Activated CD4-positive, alpha-beta memory T cell treated with anti-CD3 and anti-CD28 coated beads for 36 hours (primary cell): ENCODE measurements at regions of chr17 and their contacts with region 1.

Region 1: GRCh38 chr17:55421179-55421934 is at the start of gene MMD:
- DNase-seq: no peak
- H3K4me3 Mint-ChIP-seq: peak within 1 kb of the TSS; percentile 89
- H3K27ac Mint-ChIP-seq: peak within 1 kb of the TSS; percentile 93
- H3K4me1 Mint-ChIP-seq: peaks cover 42% of the 10 kb centered on the region
- H3K27me3 Mint-ChIP-seq: peaks cover 19% of the 10 kb centered on the region
- total RNA-seq, gene MMD: 22.1 to 24.2 TPM

Region 2: GRCh38 chr17:55314784-55315491 is 106.4 kb before region 1 on chr17:
- CTCF ChIA-PET with region 1: no interaction called
- POLR2A ChIA-PET with region 1: no interaction called
- intact Hi-C with region 1: loop called (anchors 10 kb)
- DNase-seq: peak; percentile 56
- H3K4me3 Mint-ChIP-seq: peak overlapping the region; percentile 18
- H3K27ac Mint-ChIP-seq: peak overlapping the region; percentile 77
- H3K4me1 Mint-ChIP-seq: peaks cover 21% of the 10 kb centered on the region
- H3K27me3 Mint-ChIP-seq: peaks cover 4% of the 10 kb centered on the region

Region 3: DNA sequence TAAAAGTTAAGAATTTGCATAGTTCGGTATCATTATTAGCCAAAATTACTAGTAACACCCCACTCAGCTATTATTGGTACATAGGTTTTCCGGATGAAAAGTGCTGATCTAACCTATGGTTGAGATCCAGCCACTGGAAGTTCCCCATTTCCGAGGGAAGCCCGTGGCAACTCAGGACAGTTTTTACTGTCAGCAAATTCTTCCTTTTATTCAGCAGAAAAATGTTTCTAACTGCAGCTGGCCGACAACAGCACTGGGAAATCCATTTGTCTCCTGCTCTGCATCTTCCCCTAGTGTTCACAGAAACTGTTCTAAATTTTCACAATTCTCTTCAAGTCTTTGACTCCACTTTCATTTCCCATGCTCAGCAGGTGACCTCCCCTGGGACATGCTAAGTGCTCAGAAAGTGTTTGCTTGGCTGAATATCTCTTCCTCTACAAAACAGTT is 15.8 kb after region 1 on chr17:
- CTCF ChIA-PET with region 1: no interaction called
- POLR2A ChIA-PET with region 1: interaction called, 5 read pairs
- intact Hi-C with region 1: loop called (anchors 1 kb)
- DNase-seq: no peak
- H3K4me3 Mint-ChIP-seq: no peak overlapping the region
- H3K27ac Mint-ChIP-seq: no peak overlapping the region
- H3K4me1 Mint-ChIP-seq: peaks cover 44% of the 10 kb centered on the region
- H3K27me3 Mint-ChIP-seq: peaks cover 24% of the 10 kb centered on the region

Region 4: DNA sequence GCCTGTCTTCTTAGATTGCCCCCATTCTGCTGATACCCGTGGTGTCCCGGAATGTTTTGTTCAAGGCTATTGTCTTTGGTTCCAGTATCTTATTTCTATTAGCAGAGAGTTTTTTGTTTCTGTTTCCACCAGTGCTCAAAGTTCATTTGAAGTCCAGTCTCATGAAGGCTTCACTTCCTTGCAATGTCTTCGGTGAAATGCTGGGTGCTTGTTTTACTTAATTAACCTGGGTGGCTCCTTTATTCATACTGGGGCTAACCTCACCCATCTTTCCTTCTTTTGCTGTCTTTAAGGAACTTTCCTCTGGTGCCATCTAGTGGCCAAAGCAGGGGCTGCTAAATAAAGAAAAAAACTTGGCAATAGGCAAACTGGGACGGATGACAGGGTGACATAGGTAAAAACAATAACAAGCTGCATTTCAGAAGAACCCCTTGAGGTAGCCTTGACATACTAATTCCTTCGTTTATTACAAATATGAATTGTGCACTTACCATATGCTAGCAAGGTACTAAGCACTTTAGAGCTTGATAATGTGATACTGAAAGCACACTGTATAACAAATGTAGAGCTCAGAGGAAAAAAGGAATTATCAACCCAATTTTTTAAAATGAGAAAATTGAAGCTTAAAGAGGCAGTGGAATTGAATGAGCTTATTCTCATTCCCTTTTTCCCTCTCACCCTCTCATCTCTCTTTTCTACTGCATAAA is 92.7 kb after region 1 on chr17:
- CTCF ChIA-PET with region 1: interaction called, 6 read pairs
- POLR2A ChIA-PET with region 1: no interaction called
- intact Hi-C with region 1: loop called (anchors 5 kb)
- DNase-seq: peak; percentile 75
- H3K4me3 Mint-ChIP-seq: no peak overlapping the region
- H3K27ac Mint-ChIP-seq: no peak overlapping the region
- H3K4me1 Mint-ChIP-seq: no peaks in the 10 kb centered on the region
- H3K27me3 Mint-ChIP-seq: peaks cover 6% of the 10 kb centered on the region